A673 (cell line): ENCODE measurements at regions of chr1 and their contacts with region 1.

Region 1: DNA sequence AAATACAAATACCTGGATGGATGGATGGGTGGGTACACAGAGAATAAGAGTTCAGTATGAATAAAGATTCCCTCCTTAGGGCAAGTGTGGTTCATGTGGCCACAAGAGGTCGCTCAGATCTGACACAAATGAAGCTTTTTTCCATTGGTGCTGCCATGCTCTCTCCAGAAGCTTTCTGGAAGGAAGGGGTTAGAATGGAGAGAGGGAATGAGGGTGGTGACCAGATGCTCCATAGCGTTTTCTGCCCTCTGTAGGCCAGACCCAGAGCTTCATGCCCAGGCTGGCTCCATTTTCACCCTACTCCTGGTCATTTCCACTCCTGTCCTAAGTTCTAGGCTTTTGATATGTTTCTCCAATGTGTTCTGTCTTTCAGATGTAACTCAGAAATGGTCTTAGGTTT is 3.3 kb upstream of the FCRL6 start:
- DNase-seq: peak; percentile 90
- H3K4me3 ChIP-seq: no peak overlapping the region
- H3K27ac ChIP-seq: no peak overlapping the region
- H3K4me1 ChIP-seq: no peaks in the 10 kb centered on the region
- H3K27me3 ChIP-seq: peaks cover 7% of the 10 kb centered on the region
- CTCF ChIP-seq: peak; percentile 88

Region 2: GRCh38 chr1:159780583-159781582 is 18.0 kb before region 1 on chr1 and contains the start of gene DUSP23:
- CTCF ChIA-PET with region 1: interaction called, 11 read pairs
- POLR2A ChIA-PET with region 1: no interaction called
- intact Hi-C with region 1: no loop called
- DNase-seq: peak; percentile 98
- H3K4me3 ChIP-seq: peak within 1 kb of the TSS; percentile 57
- H3K27ac ChIP-seq: peak within 1 kb of the TSS; percentile 26
- H3K4me1 ChIP-seq: no peaks in the 10 kb centered on the region
- H3K27me3 ChIP-seq: no peaks in the 10 kb centered on the region
- CTCF ChIP-seq: peak; percentile 95
- total RNA-seq, gene DUSP23: 27.9 and 31.0 TPM in 2 replicates

Region 3: DNA sequence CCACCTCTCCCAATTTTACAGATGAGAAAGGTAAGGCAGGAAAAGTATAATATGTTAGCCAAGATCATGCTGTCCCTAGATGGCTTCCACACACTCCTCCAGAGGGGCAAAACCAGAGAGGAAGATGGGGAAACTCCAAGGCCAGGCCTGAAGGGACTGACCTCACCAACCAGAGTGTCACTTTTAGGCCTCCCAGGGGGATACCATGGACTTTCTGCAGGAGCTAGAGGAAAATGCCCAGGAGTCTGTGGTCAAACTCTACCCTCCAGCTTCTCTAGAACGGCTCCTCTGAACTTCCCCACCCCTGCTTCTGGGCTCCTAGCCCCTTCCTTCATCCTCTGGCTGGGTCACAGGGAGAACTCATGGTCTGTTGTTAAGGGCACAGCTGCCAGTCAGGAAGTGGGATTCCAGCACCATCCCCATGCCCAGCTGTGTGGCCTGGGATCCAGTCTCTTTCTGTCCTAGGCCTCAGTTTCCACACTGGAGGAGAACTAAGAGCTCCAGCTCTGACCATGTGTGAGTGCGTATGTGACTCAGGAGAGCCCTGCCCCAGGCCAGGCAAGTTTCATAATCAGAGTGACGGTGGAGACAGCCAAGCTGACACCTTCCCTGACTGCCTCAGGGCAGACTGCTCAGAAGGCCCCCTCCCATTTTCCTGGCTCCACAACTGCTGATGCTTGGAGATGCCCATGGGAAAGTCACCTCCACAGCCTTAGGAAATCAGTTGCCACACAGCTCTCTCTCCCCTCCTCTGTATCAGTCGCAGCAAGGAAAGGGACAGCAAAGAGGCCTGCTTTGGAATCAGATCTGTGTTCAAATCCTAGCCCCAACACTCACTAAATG is 297.6 kb after region 1 on chr1:
- CTCF ChIA-PET with region 1: no interaction called
- POLR2A ChIA-PET with region 1: no interaction called
- intact Hi-C with region 1: no loop called
- DNase-seq: no peak
- H3K4me3 ChIP-seq: no peak overlapping the region
- H3K27ac ChIP-seq: no peak overlapping the region
- H3K4me1 ChIP-seq: peaks cover 17% of the 10 kb centered on the region
- H3K27me3 ChIP-seq: no peaks in the 10 kb centered on the region
- CTCF ChIP-seq: no peak